H1 (cell line): ENCODE measurements at regions of chr6 and their contacts with region 1.

Region 1: DNA sequence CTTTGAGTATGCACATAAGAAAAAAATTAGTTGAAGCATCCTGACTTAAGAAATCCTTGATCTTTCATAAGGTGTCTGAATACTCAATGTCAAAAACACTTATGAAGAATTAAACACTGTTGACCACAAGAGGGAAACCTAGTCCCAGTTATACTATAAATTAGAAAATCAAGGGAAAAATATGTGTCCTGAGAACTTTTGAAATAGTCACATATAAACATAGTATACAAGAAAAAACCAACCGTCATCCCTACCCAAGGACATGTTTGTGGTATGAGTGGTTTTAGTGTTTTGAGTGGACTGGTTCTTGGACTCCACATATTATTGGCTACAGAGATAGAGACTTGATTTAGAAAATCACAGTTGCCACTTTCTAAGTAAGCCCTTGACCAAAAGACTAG is 7.6 kb upstream of the HLA-DRA start:
- DNase-seq: no peak
- H3K4me3 ChIP-seq: no peak overlapping the region
- H3K27ac ChIP-seq: no peak overlapping the region
- H3K4me1 ChIP-seq: no peaks in the 10 kb centered on the region
- H3K27me3 ChIP-seq: no peaks in the 10 kb centered on the region
- CTCF ChIP-seq: peak in 2 of 3 experiments; percentile 29 to 30; a peak in 2 of 4 replicates
- EP300 ChIP-seq: no peak
- POLR2A ChIP-seq: no peak
- RAD21 ChIP-seq: peak in 1 of 2 experiments; percentile 66

Region 2: GRCh38 chr6:32224696-32225095 is 207.4 kb before region 1 on chr6:
- CTCF ChIA-PET with region 1: no interaction called
- POLR2A ChIA-PET with region 1: no interaction called
- DNase-seq: no peak
- H3K4me3 ChIP-seq: no peak overlapping the region
- H3K27ac ChIP-seq: no peak overlapping the region
- H3K4me1 ChIP-seq: peaks cover 0 to 9% (median under 1%) of the 10 kb centered on the region in 4 experiments; a peak in 1 of 7 replicates
- H3K27me3 ChIP-seq: no peaks in the 10 kb centered on the region
- CTCF ChIP-seq: no peak
- EP300 ChIP-seq: no peak
- POLR2A ChIP-seq: no peak
- RAD21 ChIP-seq: no peak

Region 3: DNA sequence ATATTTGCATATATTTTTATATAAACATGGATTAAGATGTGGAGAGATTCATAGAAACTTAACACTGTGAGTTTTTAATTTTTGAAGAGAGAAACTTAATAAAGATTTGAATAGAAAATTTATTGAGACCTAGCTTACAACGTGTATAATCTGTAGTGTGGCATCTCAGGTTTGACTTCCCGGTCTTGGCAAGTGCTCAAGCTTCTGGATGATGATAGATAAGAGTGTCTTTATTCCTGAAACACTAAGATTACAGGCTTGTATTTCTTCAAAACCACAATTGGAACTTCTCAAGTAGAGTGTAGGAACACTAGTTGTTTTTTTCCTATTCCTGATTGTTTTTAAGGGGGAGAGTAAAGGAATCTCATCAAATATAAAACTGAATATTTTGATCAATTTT is 143.6 kb before region 1 on chr6:
- CTCF ChIA-PET with region 1: no interaction called
- POLR2A ChIA-PET with region 1: no interaction called
- DNase-seq: no peak
- H3K4me3 ChIP-seq: no peak overlapping the region
- H3K27ac ChIP-seq: no peak overlapping the region
- H3K4me1 ChIP-seq: no peaks in the 10 kb centered on the region
- H3K27me3 ChIP-seq: no peaks in the 10 kb centered on the region
- CTCF ChIP-seq: no peak
- EP300 ChIP-seq: no peak
- POLR2A ChIP-seq: no peak
- RAD21 ChIP-seq: no peak

Region 4: DNA sequence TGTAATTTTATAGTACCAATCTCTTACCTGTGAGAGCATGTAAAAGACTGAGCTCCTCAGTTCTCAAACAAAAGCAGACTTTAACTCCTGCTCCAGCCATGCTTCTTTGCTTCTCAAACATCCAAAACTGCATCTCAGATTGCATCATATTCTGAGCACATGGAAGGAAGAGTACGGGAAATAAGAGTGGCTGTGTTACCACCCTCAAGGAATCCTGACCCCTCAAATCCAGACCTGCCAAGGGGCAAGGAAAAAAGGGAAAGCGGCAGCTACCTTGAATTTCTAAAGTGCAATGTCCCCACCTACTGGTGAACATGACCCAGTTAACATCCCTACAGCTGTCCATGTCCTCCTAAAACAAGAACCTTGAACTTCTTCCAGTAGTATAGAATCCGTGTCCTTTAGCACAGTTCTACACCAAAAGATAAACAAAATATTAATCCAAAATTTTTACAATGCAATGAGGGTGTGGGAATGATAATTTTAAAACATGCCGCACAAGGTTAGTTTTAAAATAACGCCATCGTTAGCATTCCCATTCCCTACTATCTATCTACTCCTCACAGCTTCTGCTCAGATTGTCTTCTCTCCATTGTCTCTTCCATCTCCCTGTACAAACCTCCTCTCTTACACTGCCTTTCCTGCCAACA is 268.5 kb after region 1 on chr6:
- CTCF ChIA-PET with region 1: interaction called, 12 read pairs
- POLR2A ChIA-PET with region 1: no interaction called
- DNase-seq: peak; percentile 34 to 53
- H3K4me3 ChIP-seq: no peak overlapping the region
- H3K27ac ChIP-seq: no peak overlapping the region
- H3K4me1 ChIP-seq: no peaks in the 10 kb centered on the region
- H3K27me3 ChIP-seq: no peaks in the 10 kb centered on the region
- CTCF ChIP-seq: peak; percentile 13 to 74 (median 69)
- EP300 ChIP-seq: no peak
- POLR2A ChIP-seq: no peak
- RAD21 ChIP-seq: peak; percentile 88 to 89